Transverse colon (tissue), 4 donors: ENCODE measurements at regions of chr2 and their contacts with region 1.

Region 1: DNA sequence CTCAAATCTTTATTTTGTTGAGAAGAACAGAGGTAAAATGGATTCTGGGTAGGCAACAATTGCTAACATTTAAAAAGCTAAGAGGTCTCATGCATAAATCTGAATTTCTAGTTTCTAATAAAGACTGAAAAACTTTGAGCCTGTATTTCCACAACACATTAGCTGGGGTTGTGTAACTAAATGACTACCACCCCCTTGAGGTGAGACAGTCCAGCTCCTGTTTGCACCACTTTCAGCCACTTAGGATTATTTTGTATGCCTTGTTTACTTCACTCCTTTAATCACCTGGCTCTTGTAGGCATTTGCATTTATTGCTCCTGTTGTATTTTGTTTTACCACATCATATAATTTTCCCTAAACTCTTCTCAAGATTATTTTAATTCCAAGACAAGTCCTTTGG is 376.6 kb downstream of the PTH2R start:
- DNase-seq: peak; percentile 8
- H3K4me3 ChIP-seq: no peak overlapping the region
- H3K27ac ChIP-seq: no peak overlapping the region
- H3K4me1 ChIP-seq: no peaks in the 10 kb centered on the region
- H3K27me3 ChIP-seq: no peaks in the 10 kb centered on the region
- CTCF ChIP-seq: peak in 3 of 5 experiments; percentile 27 to 37 (median 34)
- EP300 ChIP-seq: no peak
- POLR2A ChIP-seq: no peak

Region 2: GRCh38 chr2:208466151-208466919 is 316.9 kb before region 1 on chr2:
- in situ Hi-C with region 1: loop called in 1 of 4 experiments (anchors 25 kb)
- intact Hi-C with region 1: no loop called
- DNase-seq: no peak
- H3K4me3 ChIP-seq: no peak overlapping the region
- H3K27ac ChIP-seq: no peak overlapping the region
- H3K4me1 ChIP-seq: no peaks in the 10 kb centered on the region
- H3K27me3 ChIP-seq: no peaks in the 10 kb centered on the region
- CTCF ChIP-seq: peak; percentile 49 to 64 (median 58)
- EP300 ChIP-seq: no peak
- POLR2A ChIP-seq: no peak